Esophagus muscularis mucosa (tissue), 4 donors: ENCODE measurements at regions of chr15 and their contacts with region 1.

Region 1: DNA sequence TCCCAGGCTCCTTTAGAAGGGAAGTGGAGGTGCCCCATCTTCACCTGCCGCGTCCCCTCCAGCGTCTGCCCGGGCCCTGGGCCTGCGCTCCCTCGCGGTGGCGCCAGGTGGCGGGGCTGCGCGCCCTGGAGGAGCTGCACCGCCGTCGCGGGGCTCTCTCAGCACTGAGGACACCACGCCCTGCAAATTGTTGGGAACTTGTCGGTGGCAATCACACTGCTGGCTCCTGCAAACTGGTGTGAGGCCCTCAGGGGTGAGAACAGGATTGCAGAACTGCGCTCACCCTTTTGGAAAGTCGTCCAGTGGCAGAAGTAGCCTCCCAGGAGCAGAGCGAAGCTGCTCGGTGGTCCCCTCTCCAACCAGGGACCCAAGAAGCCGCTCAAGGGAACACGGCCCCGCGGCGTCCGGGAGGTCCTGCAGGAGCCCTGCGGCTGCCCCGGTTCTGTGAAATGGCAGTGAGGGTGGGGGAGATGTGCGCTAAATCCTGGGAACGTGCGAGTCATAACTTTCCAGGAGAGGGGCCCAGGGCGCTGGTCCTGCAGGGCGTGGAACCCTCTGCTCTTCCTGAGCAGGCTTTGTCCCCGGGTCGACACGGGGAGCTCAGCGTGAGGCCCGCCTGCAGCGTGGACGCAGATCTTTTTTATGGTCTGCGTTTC is 995 bp upstream of the LRRK1 start:
- DNase-seq: no peak
- H3K4me3 ChIP-seq: peak overlapping the region; percentile 59 to 82 (median 70)
- H3K27ac ChIP-seq: peak overlapping the region; percentile 63 to 82 (median 72)
- H3K4me1 ChIP-seq: peaks cover 4 to 48% (median 30%) of the 10 kb centered on the region in 4 donors
- H3K27me3 ChIP-seq: peaks cover 0 to 40% (median 4%) of the 10 kb centered on the region in 4 donors
- CTCF ChIP-seq: peak; percentile 84 to 94 (median 91)
- EP300 ChIP-seq: no peak
- POLR2A ChIP-seq: no peak

Region 2: GRCh38 chr15:100981086-100981485 is 62.9 kb after region 1 on chr15:
- intact Hi-C with region 1: no loop called
- DNase-seq: no peak
- H3K4me3 ChIP-seq: no peak overlapping the region
- H3K27ac ChIP-seq: no peak overlapping the region
- H3K4me1 ChIP-seq: no peaks in the 10 kb centered on the region
- H3K27me3 ChIP-seq: no peaks in the 10 kb centered on the region
- CTCF ChIP-seq: no peak
- EP300 ChIP-seq: no peak
- POLR2A ChIP-seq: no peak

Region 3: GRCh38 chr15:101006934-101007691 is 89.0 kb after region 1 on chr15:
- intact Hi-C with region 1: loop called (anchors 2 kb)
- DNase-seq: peak; percentile 95
- H3K4me3 ChIP-seq: peak overlapping the region in 1 of 4 donors; percentile 57
- H3K27ac ChIP-seq: peak overlapping the region in 1 of 4 donors; percentile 6
- H3K4me1 ChIP-seq: peaks cover 10 to 23% (median 20%) of the 10 kb centered on the region in 4 donors
- H3K27me3 ChIP-seq: no peaks in the 10 kb centered on the region
- CTCF ChIP-seq: peak; percentile 89 to 91 (median 90)
- EP300 ChIP-seq: no peak
- POLR2A ChIP-seq: no peak

Region 4: GRCh38 chr15:101207867-101208288 is 289.7 kb after region 1 on chr15:
- intact Hi-C with region 1: no loop called
- DNase-seq: no peak
- H3K4me3 ChIP-seq: no peak overlapping the region
- H3K27ac ChIP-seq: peak overlapping the region in 2 of 4 donors; percentile 15 to 52
- H3K4me1 ChIP-seq: peaks cover 39 to 84% (median 62%) of the 10 kb centered on the region in 4 donors
- H3K27me3 ChIP-seq: no peaks in the 10 kb centered on the region
- CTCF ChIP-seq: no peak
- EP300 ChIP-seq: no peak
- POLR2A ChIP-seq: no peak